Ascending aorta (tissue), 2 donors: ENCODE measurements at regions of chr4 and their contacts with region 1.

Region 1: GRCh38 chr4:147822128-147822527 is 90.2 kb downstream of the ARHGAP10 start:
- DNase-seq: peak; percentile 43 to 80
- H3K4me3 ChIP-seq: no peak overlapping the region
- H3K27ac ChIP-seq: peak overlapping the region; percentile 27 to 64
- H3K4me1 ChIP-seq: peaks cover 14 to 55% of the 10 kb centered on the region in 2 donors
- H3K27me3 ChIP-seq: no peaks in the 10 kb centered on the region
- CTCF ChIP-seq: no peak

Region 2: DNA sequence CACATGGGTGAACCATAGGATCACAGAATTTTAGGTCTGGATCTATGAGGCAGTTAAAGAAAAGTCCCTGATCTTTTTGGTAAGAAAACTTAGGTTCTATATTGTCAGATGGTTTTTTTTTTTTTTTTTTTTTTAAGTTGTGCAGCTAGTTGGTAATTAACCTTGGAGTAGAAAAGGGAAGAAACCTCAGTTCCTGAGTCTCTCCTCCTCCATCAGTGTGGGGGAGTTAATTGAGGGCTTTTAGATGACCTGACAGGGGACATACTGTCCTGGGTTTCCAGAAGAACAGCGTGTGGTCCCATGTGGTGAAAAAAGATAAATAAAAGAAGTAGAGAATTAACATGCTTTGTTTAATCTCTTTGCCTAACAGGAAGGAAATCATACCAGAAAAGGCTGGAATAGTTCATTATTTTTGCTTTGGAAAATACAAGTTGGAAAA is 33.5 kb after region 1 on chr4:
- intact Hi-C with region 1: loop called (anchors 5 kb)
- DNase-seq: no peak
- H3K4me3 ChIP-seq: no peak overlapping the region
- H3K27ac ChIP-seq: peak overlapping the region; percentile 67 to 80
- H3K4me1 ChIP-seq: peaks cover 7 to 46% of the 10 kb centered on the region in 2 donors
- H3K27me3 ChIP-seq: no peaks in the 10 kb centered on the region
- CTCF ChIP-seq: no peak

Region 3: GRCh38 chr4:149751174-149751573 is 1929.0 kb after region 1 on chr4:
- intact Hi-C with region 1: no loop called
- DNase-seq: no peak
- H3K4me3 ChIP-seq: no peak overlapping the region
- H3K27ac ChIP-seq: no peak overlapping the region
- H3K4me1 ChIP-seq: no peaks in the 10 kb centered on the region
- H3K27me3 ChIP-seq: no peaks in the 10 kb centered on the region
- CTCF ChIP-seq: no peak